ENCODE measurements at regions of chr20 and their contacts with region 1.

Region 1: GRCh38 chr20:24917797-24918578 is 31.1 kb upstream of the CST7 start:
- DNase-seq: peak; percentile 49 to 62
- H3K4me3 ChIP-seq: no peak overlapping the region
- H3K27ac ChIP-seq: no peak overlapping the region
- H3K4me1 ChIP-seq: 0 out of 2 replicates have a peak, but pooled peaks cover 5% of the 10 kb centered on the region
- H3K27me3 ChIP-seq: no peaks in the 10 kb centered on the region
- CTCF ChIP-seq: peak; percentile 93

Region 2: DNA sequence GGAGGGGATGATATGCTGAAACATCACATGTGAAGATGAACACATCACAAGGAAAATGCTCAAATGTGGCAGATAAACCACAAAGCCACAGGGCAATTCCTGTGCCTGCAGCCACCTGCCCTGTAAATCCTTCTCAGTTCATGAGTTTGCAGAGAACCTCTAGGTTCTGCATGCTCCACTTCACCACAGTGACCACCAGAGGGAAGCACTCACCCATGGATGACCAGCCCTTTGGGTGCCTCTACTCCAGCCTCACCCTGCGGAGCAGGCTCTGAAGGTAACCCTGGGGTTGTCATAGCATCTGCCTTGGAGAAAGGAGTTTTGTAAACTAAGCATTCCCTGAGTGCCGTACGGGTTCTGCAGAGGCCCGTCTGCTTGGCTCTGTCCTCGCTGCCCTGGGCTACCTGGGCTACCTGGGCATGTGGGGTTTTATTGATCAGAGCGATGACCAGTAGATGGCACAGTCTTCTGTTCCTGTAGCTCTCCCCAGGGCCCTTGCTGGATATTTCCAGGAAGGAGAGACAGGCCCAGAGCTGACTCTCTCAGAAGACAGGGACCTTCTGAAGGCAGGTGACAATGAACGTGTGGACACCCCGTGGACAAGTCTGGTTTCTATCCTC is 1135.5 kb before region 1 on chr20:
- CTCF ChIA-PET with region 1: no interaction called
- POLR2A ChIA-PET with region 1: no interaction called
- intact Hi-C with region 1: loop called (anchors 10 kb)
- DNase-seq: peak; percentile 36 to 61
- H3K4me3 ChIP-seq: no peak overlapping the region
- H3K27ac ChIP-seq: no peak overlapping the region
- H3K4me1 ChIP-seq: no peaks in the 10 kb centered on the region
- H3K27me3 ChIP-seq: no peaks in the 10 kb centered on the region
- CTCF ChIP-seq: peak; percentile 73

Region 3: GRCh38 chr20:23937303-23938117 is 980.5 kb before region 1 on chr20:
- CTCF ChIA-PET with region 1: interaction called, 3 read pairs
- POLR2A ChIA-PET with region 1: no interaction called
- intact Hi-C with region 1: loop called (anchors 1 kb)
- DNase-seq: peak; percentile 60 to 75
- H3K4me3 ChIP-seq: no peak overlapping the region
- H3K27ac ChIP-seq: no peak overlapping the region
- H3K4me1 ChIP-seq: no peaks in the 10 kb centered on the region
- H3K27me3 ChIP-seq: no peaks in the 10 kb centered on the region
- CTCF ChIP-seq: peak; percentile 92

Region 4: GRCh38 chr20:24359321-24360027 is 558.5 kb before region 1 on chr20:
- CTCF ChIA-PET with region 1: no interaction called
- POLR2A ChIA-PET with region 1: no interaction called
- intact Hi-C with region 1: loop called (anchors 10 kb)
- DNase-seq: no peak
- H3K4me3 ChIP-seq: no peak overlapping the region
- H3K27ac ChIP-seq: no peak overlapping the region
- H3K4me1 ChIP-seq: no peaks in the 10 kb centered on the region
- H3K27me3 ChIP-seq: no peaks in the 10 kb centered on the region
- CTCF ChIP-seq: no peak

Region 5: DNA sequence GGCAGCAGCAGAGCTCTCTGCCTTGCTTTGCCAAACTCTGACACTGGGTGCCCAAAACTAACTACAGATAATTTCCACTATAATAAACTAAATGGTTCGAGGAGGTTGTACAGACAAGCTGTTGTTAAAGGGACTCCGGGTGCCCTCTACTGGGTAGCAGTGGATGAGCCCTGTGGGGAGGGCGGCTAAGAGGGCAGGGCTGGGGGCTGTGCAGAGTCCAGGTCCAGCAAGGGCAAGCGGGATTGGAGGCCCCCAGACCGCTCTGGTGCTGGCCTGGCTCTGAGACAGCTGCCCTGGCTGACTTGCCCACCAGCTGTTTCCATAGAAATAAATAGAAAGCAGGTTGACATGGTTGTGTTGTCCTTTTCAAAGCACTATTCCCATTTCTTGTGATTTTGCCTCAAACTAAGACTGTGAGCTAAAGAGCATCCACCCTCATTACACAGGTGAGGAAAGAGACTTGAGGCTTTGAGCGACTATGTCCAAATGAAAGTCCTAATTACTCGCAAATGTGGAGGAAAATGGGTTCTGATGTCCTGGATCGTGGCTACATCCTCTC is 136.5 kb before region 1 on chr20:
- CTCF ChIA-PET with region 1: no interaction called
- POLR2A ChIA-PET with region 1: no interaction called
- intact Hi-C with region 1: loop called (anchors 5 kb)
- DNase-seq: peak in 1 of 2 experiments; percentile 32
- H3K4me3 ChIP-seq: no peak overlapping the region
- H3K27ac ChIP-seq: no peak overlapping the region
- H3K4me1 ChIP-seq: no peaks in the 10 kb centered on the region
- H3K27me3 ChIP-seq: no peaks in the 10 kb centered on the region
- CTCF ChIP-seq: peak; percentile 69

Region 6: DNA sequence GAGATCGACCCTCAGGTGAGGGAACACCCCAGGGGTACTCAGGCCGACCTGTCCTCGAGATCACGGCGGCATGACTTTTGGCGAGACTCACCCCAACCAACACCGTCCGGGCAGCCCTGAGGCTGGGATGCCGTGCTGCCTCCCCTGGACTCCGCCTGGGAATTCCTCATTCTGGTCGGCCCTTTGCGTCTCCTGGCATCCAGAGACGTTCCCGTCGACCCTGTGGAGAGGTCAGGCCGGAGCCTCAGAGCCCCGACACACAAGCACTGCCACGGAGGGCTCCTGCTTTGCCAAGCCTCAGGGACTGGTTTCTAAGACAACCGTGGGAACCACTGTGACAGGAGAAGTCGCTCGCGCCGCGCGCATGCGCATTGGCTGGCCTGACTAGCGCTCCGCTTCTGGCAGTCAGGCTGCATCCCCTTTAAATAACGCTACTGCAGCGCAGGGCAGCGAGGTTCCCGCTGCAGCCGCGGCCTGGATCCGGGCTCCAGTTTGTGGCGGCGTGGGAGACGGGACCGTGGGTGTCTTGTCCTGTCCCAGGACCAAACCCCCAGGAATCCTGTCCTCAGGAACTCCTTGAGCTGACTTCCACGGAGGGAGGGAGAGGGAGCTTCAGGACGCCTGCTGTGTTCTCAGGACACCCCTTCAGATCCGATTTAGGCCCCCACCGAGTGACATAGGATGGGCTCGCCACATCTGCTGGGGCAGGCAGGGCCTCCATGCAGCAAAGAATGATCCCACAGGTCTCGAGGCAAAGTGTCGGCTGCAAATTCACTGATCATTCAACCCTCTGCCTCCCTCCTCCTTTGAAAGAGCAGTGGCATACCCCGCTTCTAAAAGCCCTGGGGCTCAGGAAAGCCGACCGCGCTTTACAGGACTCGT is 941.9 kb after region 1 on chr20:
- CTCF ChIA-PET with region 1: no interaction called
- POLR2A ChIA-PET with region 1: no interaction called
- intact Hi-C with region 1: no loop called
- DNase-seq: peak in 1 of 2 experiments; percentile 51
- H3K4me3 ChIP-seq: no peak overlapping the region
- H3K27ac ChIP-seq: no peak overlapping the region
- H3K4me1 ChIP-seq: peaks cover 10% of the 10 kb centered on the region; the same call in 1 of the 2 replicates
- H3K27me3 ChIP-seq: no peaks in the 10 kb centered on the region
- CTCF ChIP-seq: no peak

Measured in PC-9 (cell line).